BJ (cell line): ENCODE measurements at regions of chr17 and their contacts with region 1.

Region 1: DNA sequence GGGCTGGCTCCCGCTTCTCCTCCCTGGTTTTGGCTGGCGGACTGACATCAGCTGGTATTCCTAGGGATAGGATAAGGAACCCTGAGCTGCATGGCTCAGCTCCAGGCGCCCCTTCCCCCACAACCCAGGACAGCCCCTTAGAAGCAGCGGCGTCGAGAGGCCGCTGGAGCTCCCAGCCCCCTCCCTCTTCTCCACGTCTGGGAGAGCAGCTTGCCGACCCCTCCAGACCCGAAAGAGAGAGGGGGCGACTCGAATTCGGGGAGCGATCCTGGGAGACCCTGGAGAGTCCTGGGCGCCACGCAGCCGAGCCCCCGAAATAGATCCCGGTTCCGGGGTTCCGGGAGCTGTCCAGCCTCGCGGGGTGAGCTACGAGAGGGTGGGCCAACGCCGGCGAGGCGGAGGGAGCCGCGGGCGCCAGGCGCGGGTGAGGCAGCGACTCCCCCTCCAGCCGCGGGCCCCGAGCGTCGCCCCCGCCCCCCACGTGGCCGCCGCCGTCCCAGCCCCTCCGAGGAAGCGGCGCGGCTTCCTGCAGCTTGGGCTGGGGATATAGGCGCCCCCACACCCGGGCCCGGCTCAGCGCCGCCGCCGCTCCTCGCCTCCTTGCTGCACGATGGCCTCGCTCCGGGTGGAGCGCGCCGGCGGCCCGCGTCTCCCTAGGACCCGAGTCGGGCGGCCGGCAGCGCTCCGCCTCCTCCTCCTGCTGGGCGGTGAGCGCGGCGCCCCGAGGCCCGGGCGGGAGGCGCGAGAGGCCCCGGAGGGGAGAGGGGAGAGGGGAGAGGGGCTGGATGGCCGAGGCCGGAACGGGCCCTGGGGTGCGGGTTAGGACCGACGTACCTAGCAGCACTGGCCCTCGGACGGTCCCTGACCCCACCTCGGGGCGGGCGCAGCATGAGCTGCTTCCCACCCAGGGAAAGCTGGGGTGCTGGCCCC is at the start of gene RAMP2:
- DNase-seq: no peak
- H3K4me3 ChIP-seq: peak within 1 kb of the TSS; percentile 38
- H3K27me3 ChIP-seq: peaks cover 16% of the 10 kb centered on the region
- CTCF ChIP-seq: no peak
- polyA plus RNA-seq, gene RAMP2: 1.7 and 2.8 TPM in 2 replicates

Region 2: GRCh38 chr17:42287926-42288802 is 472.8 kb before region 1 on chr17 and contains the start of gene STAT5A:
- CTCF ChIA-PET with region 1: no interaction called
- POLR2A ChIA-PET with region 1: no interaction called
- DNase-seq: no peak
- H3K4me3 ChIP-seq: peak within 1 kb of the TSS; percentile 57
- H3K27me3 ChIP-seq: no peaks in the 10 kb centered on the region
- CTCF ChIP-seq: no peak
- polyA plus RNA-seq, gene STAT5A: 6.2 and 17.2 TPM in 2 replicates

Region 3: GRCh38 chr17:42609182-42609813 is 151.6 kb before region 1 on chr17 and contains the starts of genes RETREG3 and TUBG1:
- CTCF ChIA-PET with region 1: no interaction called
- POLR2A ChIA-PET with region 1: no interaction called
- DNase-seq: peak; percentile 97
- H3K4me3 ChIP-seq: peak within 1 kb of the TSS; percentile 69
- H3K27me3 ChIP-seq: no peaks in the 10 kb centered on the region
- CTCF ChIP-seq: peak; percentile 55
- polyA plus RNA-seq, gene RETREG3: 28.4 and 54.4 TPM in 2 replicates
- polyA plus RNA-seq, gene TUBG1: 37.2 and 66.1 TPM in 2 replicates

Region 4: DNA sequence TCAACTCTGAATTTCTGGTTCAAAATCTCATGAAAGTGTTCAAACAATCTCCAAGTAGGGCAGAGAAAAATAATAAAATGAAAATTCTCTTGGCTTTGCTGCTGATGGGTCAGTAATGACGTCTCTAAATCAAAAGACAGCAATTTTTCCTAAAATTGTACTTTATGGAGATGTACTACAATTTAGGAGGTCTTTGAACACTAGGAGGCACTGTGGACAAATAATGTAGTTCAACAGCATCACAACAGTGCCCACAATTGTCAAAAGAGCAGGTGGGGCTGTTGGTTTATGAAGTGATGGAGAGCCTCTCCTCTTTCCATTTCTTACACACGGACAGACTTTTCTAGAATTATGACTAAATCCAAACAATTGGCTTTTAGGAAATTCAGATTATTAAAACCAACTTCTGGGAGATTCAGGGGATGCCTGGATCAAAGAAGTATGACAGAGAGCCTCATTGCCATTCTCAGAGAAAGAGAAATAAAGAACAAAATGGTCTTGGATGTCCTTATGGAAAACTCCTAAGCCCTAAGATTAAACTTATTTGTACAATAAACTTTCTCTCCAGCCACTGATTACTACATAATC is 39.8 kb before region 1 on chr17:
- CTCF ChIA-PET with region 1: interaction called, 14 read pairs
- POLR2A ChIA-PET with region 1: no interaction called
- DNase-seq: no peak
- H3K4me3 ChIP-seq: no peak overlapping the region
- H3K27me3 ChIP-seq: no peaks in the 10 kb centered on the region
- CTCF ChIP-seq: peak; percentile 66

Region 5: DNA sequence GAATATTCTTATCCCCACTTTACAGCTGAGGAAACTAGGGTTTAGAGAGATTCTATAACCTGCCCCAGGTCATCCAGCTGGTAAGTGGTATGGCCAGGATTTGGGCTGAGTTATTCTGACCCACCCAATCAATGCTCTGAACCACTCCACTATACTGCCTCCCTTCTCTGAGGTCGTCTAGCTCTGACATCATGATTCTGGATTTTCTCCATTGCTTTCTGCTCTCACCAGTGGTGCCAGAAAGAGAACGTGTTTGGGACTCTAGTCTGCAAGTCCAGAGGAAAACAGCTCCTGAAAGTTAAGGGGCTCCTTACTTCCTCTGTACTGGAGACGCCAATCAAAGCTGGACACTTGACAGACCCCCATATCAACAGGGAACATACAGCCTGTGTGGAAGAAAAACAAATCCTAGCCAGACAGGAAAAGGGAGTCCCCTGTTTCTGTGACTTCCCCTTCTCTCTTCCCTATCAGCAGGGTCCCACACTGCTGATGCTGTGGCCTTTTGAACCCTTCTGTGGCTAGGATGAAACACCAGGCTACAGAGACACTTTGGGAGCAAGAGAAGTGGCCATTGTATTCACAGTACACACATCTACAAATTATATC is 10.1 kb before region 1 on chr17:
- CTCF ChIA-PET with region 1: interaction called, 36 read pairs
- POLR2A ChIA-PET with region 1: no interaction called
- DNase-seq: no peak
- H3K4me3 ChIP-seq: no peak overlapping the region
- H3K27me3 ChIP-seq: peaks cover 9% of the 10 kb centered on the region
- CTCF ChIP-seq: no peak

Region 6: GRCh38 chr17:42773290-42774035 is 12.5 kb after region 1 on chr17 and contains the start of gene VPS25:
- CTCF ChIA-PET with region 1: interaction called, 20 read pairs
- POLR2A ChIA-PET with region 1: interaction called, 3 read pairs
- DNase-seq: peak; percentile 31
- H3K4me3 ChIP-seq: peak within 1 kb of the TSS; percentile 81
- H3K27me3 ChIP-seq: no peaks in the 10 kb centered on the region
- CTCF ChIP-seq: peak; percentile 34
- polyA plus RNA-seq, gene VPS25: 143 and 181 TPM in 2 replicates